IMR-90 (cell line): ENCODE measurements at regions of chr5 and their contacts with region 1.

Region 1: DNA sequence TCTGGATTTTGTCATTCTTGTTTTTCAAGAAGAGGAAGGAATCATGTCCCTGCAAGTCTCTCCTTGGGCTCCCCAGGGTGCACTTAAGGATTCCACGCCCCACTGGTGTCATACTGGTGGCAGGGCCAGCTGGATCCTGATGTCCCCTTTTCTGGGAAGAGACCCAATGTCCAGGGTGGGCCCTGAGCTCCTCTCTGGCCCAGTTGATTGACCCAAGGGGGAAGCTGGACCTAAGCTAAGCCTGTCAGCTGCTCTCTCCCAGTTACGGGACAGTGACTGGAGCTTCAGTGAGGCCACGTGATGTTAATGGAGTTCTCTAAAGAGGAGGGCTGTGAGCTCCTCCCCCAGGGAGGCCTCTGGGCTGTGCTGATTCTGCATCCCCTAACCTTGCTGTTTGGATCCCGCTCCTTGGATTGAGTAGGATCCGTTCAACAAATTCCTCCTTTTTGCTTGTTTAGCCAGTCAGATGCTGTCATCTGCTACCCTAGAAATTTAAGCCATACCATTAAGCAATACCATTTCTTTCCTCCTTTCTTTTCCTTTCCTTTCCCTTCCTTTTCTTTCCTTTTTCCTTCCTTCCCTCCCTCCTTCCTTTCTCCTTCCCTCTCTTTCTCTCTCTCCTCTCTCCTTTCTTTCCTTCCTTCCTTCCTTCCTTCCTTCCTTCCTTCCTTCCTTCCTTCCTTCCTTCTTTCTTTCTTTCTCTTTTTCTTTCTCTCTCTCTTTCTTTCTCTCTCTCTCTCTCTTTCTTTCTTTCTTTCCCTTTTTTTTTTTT is 17.2 kb downstream of the NKX2-5 start:
- DNase-seq: no peak
- ATAC-seq: no peak
- H3K4me3 ChIP-seq: no peak overlapping the region
- H3K27ac ChIP-seq: no peak overlapping the region
- H3K4me1 ChIP-seq: no peaks in the 10 kb centered on the region
- H3K27me3 ChIP-seq: peaks cover 20% of the 10 kb centered on the region
- CTCF ChIP-seq: no peak
- POLR2A ChIP-seq: no peak
- RAD21 ChIP-seq: no peak

Region 2: DNA sequence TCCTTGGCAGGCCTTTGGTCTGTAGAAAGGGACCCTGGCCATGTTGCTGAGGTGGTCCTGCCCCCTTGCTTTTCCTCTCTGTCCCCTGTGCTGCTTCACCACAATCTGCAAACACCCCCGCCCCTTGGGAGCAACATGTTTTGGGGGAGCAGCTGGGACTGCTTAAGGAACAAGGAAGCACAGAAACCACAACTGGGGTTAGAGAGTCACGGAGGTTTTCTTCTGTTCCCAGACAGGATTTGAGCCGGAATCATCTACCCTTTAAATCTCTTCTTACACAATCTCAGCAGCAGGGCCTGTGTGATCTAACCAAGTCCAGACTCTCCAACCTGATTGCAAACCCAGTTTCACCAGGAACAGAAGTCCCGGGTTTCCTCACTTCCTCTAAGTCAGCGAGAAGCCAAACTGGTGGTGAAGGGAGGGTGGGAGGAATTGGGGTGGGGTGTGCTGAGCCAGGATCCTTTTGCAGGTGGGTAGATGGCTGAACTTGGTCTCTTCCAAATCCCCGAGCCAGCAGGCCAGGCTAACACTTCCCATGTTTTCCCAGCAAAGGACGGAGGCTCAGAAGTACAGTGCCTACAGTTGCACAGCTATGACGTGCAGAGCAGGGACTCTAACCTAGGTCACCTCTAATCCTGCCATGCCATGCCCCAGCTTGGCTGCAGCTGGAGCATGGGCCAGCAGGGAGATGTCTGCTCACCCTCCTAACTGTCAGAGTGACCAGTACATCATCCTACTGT is 788.4 kb before region 1 on chr5:
- CTCF ChIA-PET with region 1: no interaction called
- POLR2A ChIA-PET with region 1: no interaction called
- dilution Hi-C with region 1: no loop called
- in situ Hi-C with region 1: no loop called
- intact Hi-C with region 1: no loop called
- DNase-seq: peak; percentile 82
- ATAC-seq: peak; percentile 80
- H3K4me3 ChIP-seq: no peak overlapping the region
- H3K27ac ChIP-seq: peak overlapping the region; percentile 39; the same call in 1 of the 2 replicates
- H3K4me1 ChIP-seq: peaks cover 26% of the 10 kb centered on the region; the same call in 1 of the 2 replicates
- H3K27me3 ChIP-seq: no peaks in the 10 kb centered on the region
- CTCF ChIP-seq: no peak
- POLR2A ChIP-seq: no peak
- RAD21 ChIP-seq: no peak

Region 3: GRCh38 chr5:173029499-173029921 is 188.3 kb before region 1 on chr5:
- CTCF ChIA-PET with region 1: no interaction called
- POLR2A ChIA-PET with region 1: no interaction called
- dilution Hi-C with region 1: no loop called
- in situ Hi-C with region 1: no loop called
- intact Hi-C with region 1: no loop called
- DNase-seq: no peak
- ATAC-seq: peak; percentile 47; the same call in 1 of the 2 replicates
- H3K4me3 ChIP-seq: no peak overlapping the region
- H3K27ac ChIP-seq: peak overlapping the region; percentile 50; the same call in 1 of the 2 replicates
- H3K4me1 ChIP-seq: peaks cover 12% of the 10 kb centered on the region
- H3K27me3 ChIP-seq: no peaks in the 10 kb centered on the region
- CTCF ChIP-seq: no peak
- POLR2A ChIP-seq: no peak
- RAD21 ChIP-seq: no peak

Region 4: GRCh38 chr5:173236531-173237142 is 18.8 kb after region 1 on chr5:
- CTCF ChIA-PET with region 1: no interaction called
- POLR2A ChIA-PET with region 1: interaction called, 14 read pairs
- dilution Hi-C with region 1: no loop called
- in situ Hi-C with region 1: no loop called
- intact Hi-C with region 1: no loop called
- DNase-seq: no peak
- ATAC-seq: no peak
- H3K4me3 ChIP-seq: no peak overlapping the region
- H3K27ac ChIP-seq: no peak overlapping the region
- H3K4me1 ChIP-seq: peaks cover 2% of the 10 kb centered on the region; the same call in 1 of the 2 replicates
- H3K27me3 ChIP-seq: peaks cover 90% of the 10 kb centered on the region
- CTCF ChIP-seq: no peak
- POLR2A ChIP-seq: no peak
- RAD21 ChIP-seq: no peak